PC-9 (cell line): ENCODE measurements at regions of chr5 and their contacts with region 1.

Region 1: GRCh38 chr5:1325870-1326532 is 18.9 kb downstream of the CLPTM1L start:
- DNase-seq: peak in 1 of 2 experiments; percentile 38
- H3K4me3 ChIP-seq: peak overlapping the region; percentile 7; the same call in 1 of the 2 replicates
- H3K27ac ChIP-seq: peak overlapping the region; percentile 86
- H3K4me1 ChIP-seq: peaks cover 38% of the 10 kb centered on the region
- H3K27me3 ChIP-seq: no peaks in the 10 kb centered on the region
- CTCF ChIP-seq: no peak

Region 2: DNA sequence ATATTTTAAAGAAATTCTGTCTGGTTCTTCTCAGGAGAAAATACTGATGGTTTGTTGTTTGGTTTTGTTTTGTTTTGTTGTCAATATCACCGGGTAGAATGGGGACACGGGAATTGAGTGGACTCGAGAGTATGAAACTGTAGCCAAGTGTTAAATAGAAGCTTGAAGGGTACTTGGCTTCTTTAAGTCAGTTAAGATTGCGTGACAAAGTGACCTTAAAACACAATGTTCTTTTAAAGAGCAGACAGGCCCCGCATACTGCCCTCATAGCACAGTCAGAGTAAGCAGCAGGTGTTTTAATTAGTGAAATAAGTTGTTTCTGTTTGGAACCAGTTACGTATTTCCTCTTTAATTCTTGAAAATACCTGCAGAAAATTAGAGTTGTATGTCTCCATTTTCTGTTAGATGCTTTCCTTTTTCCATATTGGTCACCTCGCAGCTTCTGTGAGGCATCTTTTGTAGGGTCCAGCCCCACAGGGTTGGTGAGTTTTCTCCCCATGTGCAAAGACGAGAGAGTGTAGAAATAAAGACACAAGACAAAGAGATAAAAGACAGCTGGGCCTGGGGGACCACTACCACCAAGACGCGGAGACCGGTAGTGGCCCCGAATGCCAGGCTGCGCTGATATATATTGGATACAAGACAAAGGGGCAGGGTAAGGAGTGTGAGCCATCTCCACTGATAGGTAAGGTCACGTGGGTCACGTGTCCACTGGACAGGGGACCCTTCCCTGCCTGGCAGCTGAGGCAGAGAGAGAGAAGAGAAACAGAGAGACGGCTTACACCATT is 423.7 kb before region 1 on chr5:
- CTCF ChIA-PET with region 1: no interaction called
- POLR2A ChIA-PET with region 1: interaction called, 16 read pairs
- intact Hi-C with region 1: no loop called
- DNase-seq: no peak
- H3K4me3 ChIP-seq: no peak overlapping the region
- H3K27ac ChIP-seq: no peak overlapping the region
- H3K4me1 ChIP-seq: no peaks in the 10 kb centered on the region
- H3K27me3 ChIP-seq: no peaks in the 10 kb centered on the region
- CTCF ChIP-seq: no peak

Region 3: DNA sequence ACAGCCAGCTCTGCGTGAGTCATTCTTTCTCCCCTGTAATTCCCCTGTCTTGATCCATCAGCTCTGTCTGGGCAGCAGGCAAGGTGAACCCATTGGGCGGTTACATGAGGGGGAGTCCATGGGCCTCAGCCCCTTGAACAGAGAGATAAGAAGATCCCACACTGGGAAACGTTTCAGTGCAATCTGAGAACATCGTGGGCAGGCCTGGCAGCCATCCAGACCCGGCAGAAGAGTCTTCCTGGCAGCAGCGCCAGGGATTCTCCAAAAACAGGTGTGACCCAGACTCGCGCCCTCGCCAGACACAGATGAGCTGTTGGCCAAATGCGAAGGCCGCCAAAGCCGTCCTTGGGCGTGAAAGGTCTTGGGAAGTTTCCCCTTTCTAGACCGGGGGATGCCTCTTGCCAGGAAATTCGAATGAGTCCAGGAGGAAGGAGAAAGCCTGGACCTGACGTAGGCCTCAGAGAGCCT is 207.7 kb before region 1 on chr5:
- CTCF ChIA-PET with region 1: no interaction called
- POLR2A ChIA-PET with region 1: interaction called, 15 read pairs
- intact Hi-C with region 1: loop called (anchors 2 kb)
- DNase-seq: peak; percentile 58 to 79
- H3K4me3 ChIP-seq: no peak overlapping the region
- H3K27ac ChIP-seq: no peak overlapping the region
- H3K4me1 ChIP-seq: peaks cover 35% of the 10 kb centered on the region
- H3K27me3 ChIP-seq: no peaks in the 10 kb centered on the region
- CTCF ChIP-seq: no peak

Region 4: GRCh38 chr5:1315709-1316587 is 10.1 kb before region 1 on chr5:
- CTCF ChIA-PET with region 1: no interaction called
- POLR2A ChIA-PET with region 1: interaction called, 17 read pairs
- intact Hi-C with region 1: loop called (anchors 1 kb)
- DNase-seq: peak; percentile 95 to 97
- H3K4me3 ChIP-seq: peak overlapping the region; percentile 24; the same call in 1 of the 2 replicates
- H3K27ac ChIP-seq: peak overlapping the region; percentile 27
- H3K4me1 ChIP-seq: peaks cover 40% of the 10 kb centered on the region
- H3K27me3 ChIP-seq: peaks cover 2% of the 10 kb centered on the region; the same call in 1 of the 2 replicates
- CTCF ChIP-seq: no peak

Region 5: DNA sequence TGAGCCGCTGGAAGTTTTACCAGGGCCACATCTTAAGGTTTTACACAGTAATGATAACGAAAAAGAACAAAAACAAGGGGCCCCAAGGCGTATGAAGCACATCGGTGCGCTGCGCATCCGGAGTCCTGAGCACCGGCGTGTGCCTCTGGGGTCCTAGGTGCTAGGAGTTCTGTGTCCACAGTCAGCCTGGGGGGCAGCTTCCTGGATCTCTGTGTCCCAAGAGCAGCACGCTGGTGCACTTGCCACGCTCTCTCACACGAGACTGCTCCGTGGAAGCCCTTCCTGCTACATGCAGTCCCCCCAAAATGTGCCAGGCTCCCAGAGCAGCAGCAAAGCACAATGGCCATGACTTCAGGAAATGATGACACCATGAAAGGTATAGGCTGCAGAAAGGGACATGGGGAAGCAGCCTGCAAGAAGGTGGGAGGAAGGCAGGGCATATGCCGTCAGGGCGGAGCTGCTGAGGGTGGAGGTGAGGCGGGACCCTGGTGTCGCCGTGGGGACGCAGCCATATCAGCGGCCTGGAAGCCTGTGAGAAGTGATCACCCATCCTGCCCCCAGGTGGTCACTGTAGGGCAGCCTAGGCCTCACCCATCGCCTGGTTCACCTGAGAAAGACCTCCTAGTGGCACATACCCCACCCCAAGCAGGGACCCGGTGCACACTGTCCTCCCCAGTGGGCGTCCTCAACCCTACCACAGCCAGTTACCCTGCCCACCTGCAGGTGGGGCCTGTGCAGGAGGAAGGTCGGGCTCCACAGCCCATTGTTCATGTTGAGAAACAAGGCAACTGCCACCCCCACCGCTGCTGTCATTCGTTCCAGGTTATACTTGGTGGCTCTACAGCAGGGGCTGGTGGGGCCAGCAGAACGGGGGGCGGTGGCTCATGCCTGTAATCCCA is 142.9 kb after region 1 on chr5:
- CTCF ChIA-PET with region 1: interaction called, 16 read pairs
- POLR2A ChIA-PET with region 1: no interaction called
- intact Hi-C with region 1: no loop called
- DNase-seq: no peak
- H3K4me3 ChIP-seq: no peak overlapping the region
- H3K27ac ChIP-seq: no peak overlapping the region
- H3K4me1 ChIP-seq: no peaks in the 10 kb centered on the region
- H3K27me3 ChIP-seq: no peaks in the 10 kb centered on the region
- CTCF ChIP-seq: no peak

Region 6: GRCh38 chr5:1542755-1543154 is 216.8 kb after region 1 on chr5:
- CTCF ChIA-PET with region 1: no interaction called
- POLR2A ChIA-PET with region 1: interaction called, 18 read pairs
- intact Hi-C with region 1: no loop called
- DNase-seq: peak; percentile 83 to 94
- H3K4me3 ChIP-seq: no peak overlapping the region
- H3K27ac ChIP-seq: no peak overlapping the region
- H3K4me1 ChIP-seq: peaks cover 32% of the 10 kb centered on the region
- H3K27me3 ChIP-seq: no peaks in the 10 kb centered on the region
- CTCF ChIP-seq: no peak